Activated T-helper 1 cell treated with anti-CD3 and anti-CD28 coated beads, Interleukin-12 subunit alpha, Interleukin-12 subunit beta, Interleukin-2, Interleukin-4 antibody, amounts not matched to agents 30 ng/mL and 10 ng/mL and 1 ng/mL, durations not matched to agents 14 hours and 24 hours and 36 hours (primary cell): ENCODE measurements at regions of chr3 and their contacts with region 1.

Region 1: DNA sequence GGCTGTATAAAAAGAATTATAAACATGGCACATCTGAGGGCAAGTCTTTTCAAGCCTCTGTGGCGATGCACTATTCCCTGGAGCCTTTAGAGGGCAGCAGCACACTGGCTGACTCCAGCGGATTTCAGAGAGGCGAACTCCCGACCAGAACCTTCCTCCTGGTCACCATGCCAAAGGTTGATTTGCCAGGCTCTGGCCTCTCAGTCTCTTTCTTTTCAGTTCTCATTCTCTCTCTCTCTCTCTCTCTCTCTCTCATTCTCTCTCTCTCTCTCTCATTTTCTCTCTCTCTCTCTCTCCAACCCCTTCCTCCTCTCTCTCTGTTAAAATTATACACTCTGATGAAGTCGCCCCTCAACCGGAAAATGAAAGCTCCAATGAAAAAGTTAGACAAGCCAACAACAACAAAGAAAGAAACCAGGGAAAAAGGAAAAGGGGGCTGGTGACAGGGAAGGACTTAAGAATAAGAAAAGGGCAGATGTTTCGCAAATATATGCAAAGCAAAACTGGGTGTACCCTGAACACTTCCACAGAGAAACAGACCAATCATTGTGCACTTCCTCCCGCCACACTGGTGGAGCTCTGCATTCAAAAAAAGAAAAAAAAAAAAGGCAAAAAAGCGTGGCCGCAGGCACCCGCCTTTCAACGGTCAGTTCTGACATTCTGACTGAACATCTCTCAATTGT is 90.2 kb downstream of the TIGIT start:
- DNase-seq: peak; percentile 34
- H3K4me3 Mint-ChIP-seq: peak overlapping the region; percentile 63
- H3K27ac Mint-ChIP-seq: peak overlapping the region; percentile 56
- H3K4me1 Mint-ChIP-seq: peaks cover 9% of the 10 kb centered on the region
- H3K27me3 Mint-ChIP-seq: peaks cover 3% of the 10 kb centered on the region

Region 2: DNA sequence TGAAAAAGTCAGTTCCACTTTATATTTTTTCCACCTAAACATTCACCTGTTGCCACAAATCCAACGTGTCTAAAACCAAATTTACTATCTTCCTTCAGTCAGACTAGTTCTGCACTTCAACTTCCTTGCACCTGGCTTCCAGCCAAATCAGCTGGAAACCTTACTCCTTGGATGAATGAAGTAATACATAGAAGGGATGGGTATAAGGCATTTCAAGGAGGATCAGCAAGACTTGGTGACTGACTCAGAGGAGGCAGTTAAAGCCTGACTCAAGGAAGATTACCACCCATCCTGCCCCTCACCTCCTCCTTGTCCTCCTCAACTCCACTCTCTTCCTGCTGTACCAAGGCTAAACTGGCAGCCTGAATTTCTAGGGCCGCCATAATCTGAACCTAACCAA is 290.4 kb before region 1 on chr3:
- intact Hi-C with region 1: no loop called
- DNase-seq: no peak
- H3K4me3 Mint-ChIP-seq: no peak overlapping the region
- H3K27ac Mint-ChIP-seq: no peak overlapping the region
- H3K4me1 Mint-ChIP-seq: no peaks in the 10 kb centered on the region
- H3K27me3 Mint-ChIP-seq: peaks cover 8% of the 10 kb centered on the region

Region 3: DNA sequence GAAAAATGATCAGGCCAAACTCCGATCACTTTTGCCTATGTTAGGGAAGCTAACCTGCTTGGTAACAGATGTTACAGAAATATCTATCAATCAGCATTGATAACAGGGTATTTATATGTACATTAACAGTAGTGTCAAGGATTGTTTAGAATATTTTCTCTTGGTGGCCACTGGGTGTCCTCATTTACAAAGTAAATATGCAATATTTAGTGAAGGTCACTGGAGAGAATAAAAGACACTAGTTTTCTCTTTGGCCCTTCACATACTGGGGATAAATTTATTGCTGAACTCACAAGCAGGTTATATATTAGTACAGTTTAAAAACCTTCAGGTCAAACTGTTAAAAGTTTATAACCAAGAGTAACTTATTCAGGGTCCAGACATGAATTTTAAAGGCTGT is 21.2 kb before region 1 on chr3:
- intact Hi-C with region 1: loop called (anchors 2 kb)
- DNase-seq: no peak
- H3K4me3 Mint-ChIP-seq: no peak overlapping the region
- H3K27ac Mint-ChIP-seq: no peak overlapping the region
- H3K4me1 Mint-ChIP-seq: no peaks in the 10 kb centered on the region
- H3K27me3 Mint-ChIP-seq: peaks cover 3% of the 10 kb centered on the region